Lower leg skin (tissue), 4 donors: ENCODE measurements at regions of chr16 and their contacts with region 1.

Region 1: DNA sequence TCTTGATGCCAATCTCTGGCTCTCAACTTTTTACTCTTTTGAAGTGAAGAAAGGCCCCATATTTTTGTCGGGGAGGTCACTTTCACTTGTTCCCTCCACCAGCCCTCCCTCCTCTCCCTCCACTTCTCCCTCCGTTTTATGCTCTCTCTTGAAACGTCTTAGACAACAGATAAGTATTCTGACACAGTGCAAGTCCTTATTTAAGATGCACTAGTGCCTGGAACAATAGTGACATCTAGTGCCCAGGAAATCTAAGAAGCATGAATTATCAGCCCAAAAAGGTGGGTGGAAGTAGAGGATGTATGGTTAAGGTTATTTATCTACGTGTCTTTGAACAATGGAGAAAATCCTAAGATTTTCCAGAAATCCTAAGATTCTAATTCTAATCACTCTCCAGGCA is 17.9 kb downstream of the PSME3IP1 start:
- DNase-seq: no peak
- H3K4me3 ChIP-seq: no peak overlapping the region
- CTCF ChIP-seq: no peak
- POLR2A ChIP-seq: no peak

Region 2: GRCh38 chr16:57089406-57089805 is 78.5 kb before region 1 on chr16:
- intact Hi-C with region 1: loop called (anchors 5 kb)
- DNase-seq: no peak
- H3K4me3 ChIP-seq: no peak overlapping the region
- CTCF ChIP-seq: no peak
- POLR2A ChIP-seq: no peak